CD8-positive, alpha-beta T cell (primary cell): ENCODE measurements at regions of chr6 and their contacts with region 1.

Region 1: DNA sequence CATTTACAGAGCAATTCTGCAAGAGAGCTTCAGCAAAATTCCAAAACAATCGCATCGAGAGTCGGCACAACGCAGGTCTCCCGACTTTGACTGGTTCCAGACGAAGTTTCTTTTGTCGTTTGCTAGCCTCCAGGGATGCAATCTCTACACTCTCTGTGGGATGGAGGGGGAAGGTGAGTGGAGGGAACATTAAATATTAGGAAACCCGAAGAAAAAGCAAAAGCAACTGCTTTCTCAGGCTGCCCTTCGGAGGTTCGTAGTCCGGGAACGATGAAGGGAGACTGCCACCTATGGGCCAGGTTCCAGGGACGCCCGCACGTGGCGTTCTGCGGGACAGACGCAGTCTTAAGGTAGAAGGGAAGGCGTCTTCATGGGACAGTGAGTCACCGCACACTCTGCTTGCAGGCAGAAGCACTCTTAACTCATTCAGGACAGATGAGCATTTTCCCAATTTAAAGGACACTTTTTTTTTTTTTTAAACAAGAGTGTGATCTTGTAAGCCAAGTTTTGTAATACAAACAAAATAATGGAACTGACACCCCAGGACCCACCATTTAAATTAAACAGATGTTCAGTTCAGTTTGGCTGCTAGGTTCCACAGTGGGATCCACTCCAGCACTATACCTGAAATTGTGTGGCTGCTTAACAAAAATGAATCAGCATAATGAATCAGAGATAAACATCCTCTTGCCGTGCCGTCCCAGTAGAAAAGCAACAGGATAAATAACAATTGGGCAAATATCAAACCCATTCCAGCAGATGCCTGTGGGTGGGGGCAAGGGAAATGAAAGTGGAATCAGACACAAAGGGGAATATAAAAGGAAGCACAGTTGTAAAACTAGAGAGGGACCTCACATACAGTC is 65.8 kb upstream of the ARMC2 start:
- DNase-seq: peak; percentile 55 to 86 (median 78)
- ATAC-seq: peak; percentile 100
- H3K4me3 ChIP-seq: peak overlapping the region; percentile 56
- H3K4me3 Mint-ChIP-seq: peak overlapping the region; percentile 85
- H3K27ac ChIP-seq: no peak overlapping the region
- H3K27ac Mint-ChIP-seq: no peak overlapping the region
- H3K4me1 ChIP-seq: peaks cover 6% of the 10 kb centered on the region
- H3K4me1 Mint-ChIP-seq: peaks cover 8% of the 10 kb centered on the region
- H3K27me3 ChIP-seq: no peaks in the 10 kb centered on the region
- H3K27me3 Mint-ChIP-seq: no peaks in the 10 kb centered on the region
- CTCF ChIP-seq: peak; percentile 69

Region 2: GRCh38 chr6:108541838-108542759 is 240.3 kb before region 1 on chr6:
- CTCF ChIA-PET with region 1: interaction called, 37 read pairs
- POLR2A ChIA-PET with region 1: no interaction called
- intact Hi-C with region 1: loop called (anchors 1 kb)
- DNase-seq: peak; percentile 39 to 87 (median 69)
- ATAC-seq: peak; percentile 92
- H3K4me3 ChIP-seq: no peak overlapping the region
- H3K4me3 Mint-ChIP-seq: no peak overlapping the region
- H3K27ac ChIP-seq: no peak overlapping the region
- H3K27ac Mint-ChIP-seq: no peak overlapping the region
- H3K4me1 ChIP-seq: peaks cover 12% of the 10 kb centered on the region
- H3K4me1 Mint-ChIP-seq: peaks cover 16% of the 10 kb centered on the region
- H3K27me3 ChIP-seq: no peaks in the 10 kb centered on the region
- H3K27me3 Mint-ChIP-seq: no peaks in the 10 kb centered on the region
- CTCF ChIP-seq: peak; percentile 95

Region 3: DNA sequence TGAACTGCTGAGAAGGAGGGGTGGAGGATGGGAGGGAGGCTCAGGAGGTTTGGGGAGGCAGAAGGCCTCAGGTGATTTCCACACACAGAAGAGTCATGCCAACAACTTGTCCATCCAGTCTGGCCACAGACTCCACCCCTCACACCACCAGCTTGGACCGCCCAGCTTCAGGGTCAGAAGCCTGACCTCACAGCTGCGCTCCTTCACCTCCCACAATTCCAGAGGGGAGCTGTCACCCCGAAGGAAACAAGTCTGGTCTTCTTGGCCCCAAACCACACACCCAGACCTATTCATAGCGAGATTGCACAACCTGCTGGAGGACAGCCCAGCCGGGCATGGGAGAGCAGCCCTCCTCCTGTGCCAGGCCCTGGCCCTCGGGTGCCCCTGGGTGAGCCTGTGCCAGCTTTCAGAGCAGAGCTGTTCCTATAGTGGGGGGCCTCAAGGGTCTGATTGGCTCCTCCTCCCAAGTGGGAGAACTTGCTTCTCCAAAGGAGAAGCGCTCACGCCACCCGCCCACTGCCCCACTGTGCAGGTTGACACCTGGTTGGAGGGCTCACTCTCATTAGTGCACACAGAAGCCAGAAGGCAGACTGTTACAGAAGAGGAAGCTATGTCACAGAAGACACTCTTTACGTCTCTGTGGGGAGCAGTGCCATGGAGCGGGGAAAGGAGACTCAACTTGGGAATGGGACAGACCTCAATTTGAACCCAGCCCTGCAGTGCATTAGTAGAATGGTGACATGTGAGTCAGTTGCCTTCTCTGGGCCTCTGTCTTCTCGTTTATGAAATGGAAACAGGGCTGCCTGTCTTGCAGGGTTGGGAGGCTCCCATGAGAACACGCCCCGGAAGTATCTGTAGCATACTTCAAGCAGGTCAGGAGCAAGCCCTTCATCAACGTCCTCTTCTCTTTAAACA is 92.9 kb before region 1 on chr6:
- CTCF ChIA-PET with region 1: no interaction called
- POLR2A ChIA-PET with region 1: no interaction called
- intact Hi-C with region 1: no loop called
- DNase-seq: no peak
- ATAC-seq: no peak
- H3K4me3 ChIP-seq: no peak overlapping the region
- H3K4me3 Mint-ChIP-seq: no peak overlapping the region
- H3K27ac ChIP-seq: no peak overlapping the region
- H3K27ac Mint-ChIP-seq: no peak overlapping the region
- H3K4me1 ChIP-seq: no peaks in the 10 kb centered on the region
- H3K4me1 Mint-ChIP-seq: peaks cover 18% of the 10 kb centered on the region
- H3K27me3 ChIP-seq: no peaks in the 10 kb centered on the region
- H3K27me3 Mint-ChIP-seq: no peaks in the 10 kb centered on the region
- CTCF ChIP-seq: no peak

Region 4: DNA sequence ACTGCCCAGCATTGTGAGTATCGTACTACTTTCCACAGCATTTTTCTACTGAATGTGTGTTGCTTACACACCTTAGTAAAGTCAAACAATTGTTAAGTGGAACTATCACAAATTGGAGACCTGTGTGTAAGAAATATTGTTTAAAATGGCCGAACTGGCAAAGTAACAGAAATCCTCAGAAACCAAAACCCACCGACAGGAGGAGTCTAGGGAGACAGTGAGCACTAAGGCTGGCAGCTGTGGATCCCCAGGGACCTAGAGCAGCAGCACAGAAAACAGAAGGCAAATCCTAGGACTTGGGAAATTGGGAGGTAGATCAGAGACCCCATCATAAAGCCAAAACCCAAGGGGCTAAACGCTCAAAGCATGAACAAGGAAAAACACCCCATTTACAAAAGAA is 242.4 kb after region 1 on chr6:
- CTCF ChIA-PET with region 1: no interaction called
- POLR2A ChIA-PET with region 1: no interaction called
- intact Hi-C with region 1: no loop called
- DNase-seq: no peak
- ATAC-seq: no peak
- H3K4me3 ChIP-seq: no peak overlapping the region
- H3K4me3 Mint-ChIP-seq: no peak overlapping the region
- H3K27ac ChIP-seq: no peak overlapping the region
- H3K27ac Mint-ChIP-seq: no peak overlapping the region
- H3K4me1 ChIP-seq: peaks cover 20% of the 10 kb centered on the region
- H3K4me1 Mint-ChIP-seq: peaks cover 47% of the 10 kb centered on the region
- H3K27me3 ChIP-seq: no peaks in the 10 kb centered on the region
- H3K27me3 Mint-ChIP-seq: no peaks in the 10 kb centered on the region
- CTCF ChIP-seq: no peak